ENCODE measurements at regions of chr1 and their contacts with region 1.

Region 1: DNA sequence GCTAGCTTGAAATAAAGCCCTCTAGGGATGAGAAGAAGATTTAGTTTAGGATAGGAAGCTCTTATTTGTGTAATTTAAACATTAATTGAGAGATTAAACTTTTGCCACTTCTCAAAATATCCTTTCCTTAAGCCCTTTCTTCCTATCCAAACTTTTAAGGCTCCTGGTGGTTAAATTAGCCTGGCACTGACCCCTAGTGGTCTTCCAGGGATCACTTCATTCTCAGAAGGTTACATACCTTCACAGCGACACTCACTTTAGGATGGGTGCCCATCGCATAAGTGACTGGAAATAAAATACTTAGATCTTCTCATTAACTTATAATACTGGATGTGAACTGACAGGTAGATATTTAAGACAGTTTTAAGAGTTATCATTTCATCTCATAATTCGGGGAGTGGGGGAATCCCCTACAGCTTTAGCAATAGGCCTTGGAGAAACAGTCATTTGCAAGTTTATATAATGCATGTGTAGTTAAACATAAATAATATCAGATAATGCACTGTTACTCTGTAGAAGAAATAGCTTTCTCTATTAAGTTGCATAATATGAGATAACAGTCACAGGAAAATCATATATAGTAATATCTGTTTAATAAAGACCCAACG is 7.4 kb downstream of the LHX9 start:
- DNase-seq: peak; percentile 68
- ATAC-seq: peak; percentile 76
- H3K4me3 ChIP-seq: no peak overlapping the region
- H3K27ac ChIP-seq: no peak overlapping the region
- H3K4me1 ChIP-seq: no peaks in the 10 kb centered on the region
- H3K27me3 ChIP-seq: no peaks in the 10 kb centered on the region
- CTCF ChIP-seq: peak; percentile 72

Region 2: DNA sequence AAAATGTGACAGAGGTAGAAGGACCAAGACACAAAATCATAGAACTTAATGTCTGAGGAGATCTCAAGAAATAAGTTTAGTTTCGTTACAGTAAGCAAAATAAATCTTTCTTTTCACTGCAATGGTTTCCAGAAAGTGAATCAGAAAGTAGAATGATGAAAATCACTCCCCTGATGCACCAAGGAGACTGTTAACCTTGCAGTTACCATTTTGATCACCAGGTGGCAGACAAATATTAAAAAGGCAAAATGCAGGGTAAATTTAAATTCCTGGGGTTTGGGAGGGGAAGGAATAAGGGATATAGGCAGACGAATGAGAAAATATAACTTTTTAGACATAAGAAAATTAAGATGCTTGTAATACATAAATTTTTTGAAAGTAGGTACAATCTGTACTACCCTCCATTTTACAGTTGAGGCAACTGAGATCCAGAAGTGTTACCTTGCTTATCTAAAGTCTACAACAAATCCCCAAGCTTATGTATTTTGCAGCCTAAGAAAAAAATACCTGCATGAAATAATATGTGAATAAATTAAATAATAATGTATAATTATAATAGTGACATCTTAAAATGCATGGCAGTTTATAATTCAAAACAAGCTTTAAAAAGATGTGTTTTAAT is 403.4 kb before region 1 on chr1:
- CTCF ChIA-PET with region 1: no interaction called
- POLR2A ChIA-PET with region 1: no interaction called
- intact Hi-C with region 1: loop called (anchors 1 kb)
- DNase-seq: peak; percentile 60
- ATAC-seq: 0 out of 2 replicates have a peak, but pooled peaks have one; percentile 27
- H3K4me3 ChIP-seq: no peak overlapping the region
- H3K27ac ChIP-seq: no peak overlapping the region
- H3K4me1 ChIP-seq: no peaks in the 10 kb centered on the region
- H3K27me3 ChIP-seq: no peaks in the 10 kb centered on the region
- CTCF ChIP-seq: peak; percentile 72

Region 3: DNA sequence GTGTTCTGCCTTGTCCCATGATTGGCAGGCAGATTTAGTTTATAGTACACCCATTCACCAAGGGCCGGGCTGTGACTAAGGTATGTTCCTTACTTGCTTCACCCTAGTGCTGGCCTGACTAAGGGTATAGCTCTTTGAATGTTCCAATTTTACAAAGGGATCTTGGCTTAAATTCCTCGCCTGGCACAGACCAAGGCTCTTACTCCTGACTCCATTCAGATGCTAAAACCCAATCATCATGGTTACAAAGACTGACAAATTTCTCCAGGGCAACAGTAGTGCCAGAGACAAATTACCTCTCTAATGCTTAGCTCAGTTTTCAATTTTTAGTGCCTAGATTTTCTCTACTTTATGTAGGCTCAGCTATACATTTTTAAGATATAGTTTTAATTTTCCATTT is 33.7 kb before region 1 on chr1:
- CTCF ChIA-PET with region 1: no interaction called
- POLR2A ChIA-PET with region 1: no interaction called
- intact Hi-C with region 1: no loop called
- DNase-seq: no peak
- ATAC-seq: no peak
- H3K4me3 ChIP-seq: no peak overlapping the region
- H3K27ac ChIP-seq: no peak overlapping the region
- H3K4me1 ChIP-seq: no peaks in the 10 kb centered on the region
- H3K27me3 ChIP-seq: no peaks in the 10 kb centered on the region
- CTCF ChIP-seq: no peak

Measured in PC-3 (cell line).